Activated CD4-positive, alpha-beta T cell treated with anti-CD3 and anti-CD28 coated beads for 36 hours (primary cell): ENCODE measurements at regions of chr15 and their contacts with region 1.

Region 1: GRCh38 chr15:85582131-85583079 is 202.0 kb downstream of the AKAP13 start:
- DNase-seq: peak; percentile 81
- ATAC-seq: peak; percentile 72
- H3K4me3 Mint-ChIP-seq: peak overlapping the region; percentile 78
- H3K27ac Mint-ChIP-seq: peak overlapping the region; percentile 92
- H3K4me1 Mint-ChIP-seq: peaks cover 83% of the 10 kb centered on the region
- H3K27me3 Mint-ChIP-seq: no peaks in the 10 kb centered on the region

Region 2: DNA sequence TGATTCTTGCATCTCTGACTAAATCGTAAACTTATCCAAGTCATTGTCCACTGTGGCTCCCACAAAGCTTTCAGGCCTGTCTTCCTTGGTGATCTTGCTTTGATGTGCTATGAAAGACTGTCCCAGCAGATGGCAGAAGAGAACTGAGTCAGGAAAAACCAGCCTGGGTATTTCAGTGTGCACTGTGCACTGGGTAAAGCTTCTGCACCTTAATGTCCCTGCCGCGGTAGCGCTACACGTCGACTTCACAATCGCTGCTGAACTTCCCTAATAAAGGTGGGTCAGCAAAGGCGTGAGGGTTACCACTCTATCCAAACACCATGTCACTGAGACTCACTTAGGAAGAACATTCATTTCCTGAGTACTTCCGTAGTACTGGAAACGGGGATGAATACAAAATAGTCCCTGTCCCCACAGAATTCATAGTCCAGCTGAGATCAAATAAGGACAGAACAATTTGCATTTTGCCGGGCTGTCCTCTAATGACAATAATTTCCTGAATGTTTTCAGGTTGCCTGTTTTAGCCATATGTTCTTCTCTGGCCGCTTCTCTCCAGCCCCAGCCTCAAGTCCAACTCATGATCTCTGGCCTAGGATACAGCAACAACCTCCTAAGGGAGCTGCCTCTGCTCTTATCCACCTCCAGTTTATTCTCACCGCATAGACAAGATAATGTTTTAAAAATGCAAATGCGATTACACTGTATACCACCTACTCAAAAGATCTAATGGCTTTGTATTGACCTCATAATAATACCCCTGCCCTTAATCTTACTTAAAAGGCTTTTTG is 285.6 kb before region 1 on chr15:
- CTCF ChIA-PET with region 1: interaction called, 7 read pairs
- POLR2A ChIA-PET with region 1: no interaction called
- intact Hi-C with region 1: loop called in 1 of 2 experiments (anchors 5 kb)
- DNase-seq: peak; percentile 79
- ATAC-seq: peak; percentile 100
- H3K4me3 Mint-ChIP-seq: no peak overlapping the region
- H3K27ac Mint-ChIP-seq: peak overlapping the region; percentile 38
- H3K4me1 Mint-ChIP-seq: peaks cover 11% of the 10 kb centered on the region
- H3K27me3 Mint-ChIP-seq: peaks cover 1% of the 10 kb centered on the region

Region 3: GRCh38 chr15:85407804-85408746 is 174.3 kb before region 1 on chr15:
- CTCF ChIA-PET with region 1: interaction called, 10 read pairs
- POLR2A ChIA-PET with region 1: interaction called, 3 read pairs
- intact Hi-C with region 1: loop called (anchors 2 to 10 kb)
- DNase-seq: peak; percentile 61
- ATAC-seq: peak; percentile 64
- H3K4me3 Mint-ChIP-seq: peak overlapping the region; percentile 32
- H3K27ac Mint-ChIP-seq: peak overlapping the region; percentile 93
- H3K4me1 Mint-ChIP-seq: peaks cover 86% of the 10 kb centered on the region
- H3K27me3 Mint-ChIP-seq: no peaks in the 10 kb centered on the region

Region 4: GRCh38 chr15:85543741-85544155 is 38.7 kb before region 1 on chr15:
- CTCF ChIA-PET with region 1: interaction called, 16 read pairs
- POLR2A ChIA-PET with region 1: interaction called, 7 read pairs
- intact Hi-C with region 1: loop called (anchors 1 kb)
- DNase-seq: peak; percentile 60
- ATAC-seq: peak; percentile 10
- H3K4me3 Mint-ChIP-seq: peak overlapping the region; percentile 58
- H3K27ac Mint-ChIP-seq: peak overlapping the region; percentile 64
- H3K4me1 Mint-ChIP-seq: peaks cover 83% of the 10 kb centered on the region
- H3K27me3 Mint-ChIP-seq: no peaks in the 10 kb centered on the region

Region 5: DNA sequence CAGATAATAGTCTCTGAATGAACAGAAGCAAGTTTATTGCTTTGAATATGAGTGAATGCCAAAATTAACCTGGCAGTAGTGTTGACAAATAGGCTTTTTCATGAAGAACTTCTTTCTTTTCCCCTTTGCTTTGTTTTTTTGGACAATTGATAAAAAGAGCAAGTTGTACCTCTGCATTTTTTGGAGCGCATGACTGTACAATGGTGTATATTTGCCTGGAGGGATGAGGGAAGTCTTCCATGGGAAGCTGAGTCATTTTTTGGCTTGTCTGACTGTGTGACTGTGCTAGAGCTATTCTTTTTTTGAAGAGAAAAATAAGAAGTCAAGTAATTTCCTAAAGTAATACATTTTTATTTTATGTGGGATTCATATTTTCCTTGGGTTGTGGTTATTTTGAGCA is 25.4 kb after region 1 on chr15:
- CTCF ChIA-PET with region 1: interaction called, 4 read pairs
- POLR2A ChIA-PET with region 1: interaction called, 6 read pairs
- intact Hi-C with region 1: loop called in 1 of 2 experiments (anchors 1 kb)
- DNase-seq: no peak
- ATAC-seq: peak; percentile 20
- H3K4me3 Mint-ChIP-seq: no peak overlapping the region
- H3K27ac Mint-ChIP-seq: peak overlapping the region; percentile 51
- H3K4me1 Mint-ChIP-seq: peaks cover 28% of the 10 kb centered on the region
- H3K27me3 Mint-ChIP-seq: no peaks in the 10 kb centered on the region

Region 6: DNA sequence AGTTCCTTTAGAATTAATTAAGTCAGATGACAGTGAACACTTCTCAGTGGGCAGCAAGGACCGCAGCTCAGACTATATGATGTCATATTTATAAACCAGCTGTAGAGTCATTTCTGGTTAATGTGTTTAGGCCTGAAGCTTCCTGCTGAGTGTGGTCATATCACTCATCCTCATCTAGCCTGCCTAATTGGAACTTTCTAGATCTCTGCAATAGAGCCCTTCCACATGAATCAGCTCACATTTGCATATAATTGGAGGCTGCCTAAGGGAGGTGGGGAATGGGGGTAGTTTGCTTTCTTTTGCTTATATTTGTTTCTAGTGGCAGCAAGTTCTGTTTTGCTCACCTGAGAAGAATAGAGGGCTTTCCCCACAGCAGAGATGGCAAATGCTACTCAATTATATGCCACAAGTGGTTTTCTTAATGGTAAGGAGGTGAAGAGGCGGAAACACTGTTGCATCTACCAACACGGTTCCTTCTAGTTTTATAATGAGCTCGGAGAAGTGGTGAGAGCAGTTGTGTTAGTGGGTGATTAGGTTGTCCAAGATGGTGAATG is 64.2 kb after region 1 on chr15:
- CTCF ChIA-PET with region 1: interaction called, 4 read pairs
- POLR2A ChIA-PET with region 1: interaction called, 8 read pairs
- intact Hi-C with region 1: loop called (anchors 1 to 5 kb)
- DNase-seq: peak; percentile 48
- ATAC-seq: peak; percentile 84
- H3K4me3 Mint-ChIP-seq: no peak overlapping the region
- H3K27ac Mint-ChIP-seq: peak overlapping the region; percentile 90
- H3K4me1 Mint-ChIP-seq: peaks cover 64% of the 10 kb centered on the region
- H3K27me3 Mint-ChIP-seq: no peaks in the 10 kb centered on the region

Region 7: DNA sequence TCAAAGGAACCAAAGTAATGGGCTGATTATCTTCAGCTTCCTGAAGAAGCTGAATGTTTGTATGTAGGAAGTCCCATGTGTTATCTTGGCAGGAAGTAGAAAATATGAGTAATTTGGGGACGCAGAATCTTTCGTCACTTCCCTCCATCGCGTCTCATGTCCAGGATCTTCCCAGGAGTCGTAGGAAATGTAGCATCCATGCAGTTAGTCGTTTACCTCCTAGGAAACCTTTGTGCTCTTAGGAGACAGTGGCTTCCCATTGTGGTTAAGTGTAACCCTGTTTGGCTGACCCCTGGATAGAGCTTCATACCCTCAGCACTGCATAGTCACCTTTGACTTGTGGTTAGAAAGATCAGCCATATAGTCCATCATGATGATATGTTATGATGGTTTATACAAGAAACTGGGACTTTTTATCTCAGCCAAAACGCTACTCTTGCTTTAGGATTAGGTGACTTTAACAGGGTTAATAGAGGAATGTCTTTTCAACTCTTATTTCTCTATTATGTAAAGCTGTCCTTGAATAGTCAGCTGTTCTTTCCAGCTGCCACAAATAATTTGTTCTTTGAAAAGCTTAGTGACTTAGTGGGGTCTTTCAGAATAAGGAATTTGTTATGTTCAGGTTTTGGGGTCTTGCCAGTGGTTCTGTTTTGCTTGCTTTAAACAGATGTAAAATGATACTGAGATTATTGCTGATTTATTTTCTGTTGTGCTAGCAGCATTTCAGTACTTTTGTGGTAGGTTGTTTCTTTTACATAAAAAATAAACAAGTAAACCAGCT is 120.1 kb after region 1 on chr15:
- CTCF ChIA-PET with region 1: interaction called, 6 read pairs
- POLR2A ChIA-PET with region 1: interaction called, 8 read pairs
- intact Hi-C with region 1: loop called (anchors 1 to 2 kb)
- DNase-seq: peak; percentile 46
- ATAC-seq: peak; percentile 53
- H3K4me3 Mint-ChIP-seq: peak overlapping the region; percentile 70
- H3K27ac Mint-ChIP-seq: peak overlapping the region; percentile 94
- H3K4me1 Mint-ChIP-seq: peaks cover 73% of the 10 kb centered on the region
- H3K27me3 Mint-ChIP-seq: no peaks in the 10 kb centered on the region